ENCODE measurements at regions of chr11 and their contacts with region 1.

Region 1: GRCh38 chr11:57530596-57531507 is at the start of gene TIMM10:
- DNase-seq: peak; percentile 97
- H3K4me3 Mint-ChIP-seq: peak within 1 kb of the TSS; percentile 93
- H3K27ac Mint-ChIP-seq: peak within 1 kb of the TSS; percentile 80
- H3K4me1 Mint-ChIP-seq: peaks cover 35% of the 10 kb centered on the region
- H3K27me3 Mint-ChIP-seq: no peaks in the 10 kb centered on the region
- total RNA-seq, gene TIMM10: 131 to 134 TPM

Region 2: DNA sequence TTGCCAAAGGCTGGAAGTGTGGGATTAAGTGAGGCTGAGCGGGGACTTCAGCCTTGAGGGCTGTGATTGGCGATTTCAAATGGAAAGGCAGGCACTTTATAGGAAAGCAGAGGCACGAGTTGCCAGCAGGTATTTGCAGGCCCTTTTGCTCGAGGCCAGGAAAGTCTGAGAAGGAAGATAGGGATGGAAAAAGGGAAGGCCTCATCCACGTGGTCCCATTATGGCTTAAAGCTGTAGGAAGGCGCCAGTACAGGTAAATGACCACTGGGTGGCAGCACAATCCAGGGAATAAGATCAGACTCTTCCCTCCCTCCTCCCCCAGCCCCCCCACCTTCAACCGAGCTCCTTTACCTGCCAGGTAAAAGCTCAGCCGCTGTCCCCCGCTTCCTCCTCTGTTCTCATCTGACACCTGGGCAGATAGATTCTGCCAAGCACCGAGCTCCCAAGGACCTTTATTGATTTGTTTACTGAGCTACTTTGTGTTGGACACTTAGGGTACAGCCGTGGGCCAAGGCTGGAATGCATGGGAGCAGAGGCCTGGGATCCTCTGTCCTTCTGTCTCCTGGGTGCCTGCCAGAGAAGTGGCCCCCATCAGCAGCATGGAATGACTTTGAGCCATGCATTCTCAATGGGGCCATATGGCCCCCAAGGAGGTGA is 185.2 kb before region 1 on chr11:
- CTCF ChIA-PET with region 1: interaction called, 18 read pairs
- POLR2A ChIA-PET with region 1: no interaction called
- intact Hi-C with region 1: loop called (anchors 5 kb)
- DNase-seq: peak; percentile 76
- H3K4me3 Mint-ChIP-seq: no peak overlapping the region
- H3K27ac Mint-ChIP-seq: no peak overlapping the region
- H3K4me1 Mint-ChIP-seq: peaks cover 2% of the 10 kb centered on the region
- H3K27me3 Mint-ChIP-seq: peaks cover 2% of the 10 kb centered on the region

Region 3: GRCh38 chr11:57417056-57417455 is 113.8 kb before region 1 on chr11:
- CTCF ChIA-PET with region 1: no interaction called
- POLR2A ChIA-PET with region 1: no interaction called
- intact Hi-C with region 1: no loop called
- DNase-seq: no peak
- H3K4me3 Mint-ChIP-seq: no peak overlapping the region
- H3K27ac Mint-ChIP-seq: no peak overlapping the region
- H3K4me1 Mint-ChIP-seq: peaks cover 67% of the 10 kb centered on the region
- H3K27me3 Mint-ChIP-seq: no peaks in the 10 kb centered on the region

Region 4: DNA sequence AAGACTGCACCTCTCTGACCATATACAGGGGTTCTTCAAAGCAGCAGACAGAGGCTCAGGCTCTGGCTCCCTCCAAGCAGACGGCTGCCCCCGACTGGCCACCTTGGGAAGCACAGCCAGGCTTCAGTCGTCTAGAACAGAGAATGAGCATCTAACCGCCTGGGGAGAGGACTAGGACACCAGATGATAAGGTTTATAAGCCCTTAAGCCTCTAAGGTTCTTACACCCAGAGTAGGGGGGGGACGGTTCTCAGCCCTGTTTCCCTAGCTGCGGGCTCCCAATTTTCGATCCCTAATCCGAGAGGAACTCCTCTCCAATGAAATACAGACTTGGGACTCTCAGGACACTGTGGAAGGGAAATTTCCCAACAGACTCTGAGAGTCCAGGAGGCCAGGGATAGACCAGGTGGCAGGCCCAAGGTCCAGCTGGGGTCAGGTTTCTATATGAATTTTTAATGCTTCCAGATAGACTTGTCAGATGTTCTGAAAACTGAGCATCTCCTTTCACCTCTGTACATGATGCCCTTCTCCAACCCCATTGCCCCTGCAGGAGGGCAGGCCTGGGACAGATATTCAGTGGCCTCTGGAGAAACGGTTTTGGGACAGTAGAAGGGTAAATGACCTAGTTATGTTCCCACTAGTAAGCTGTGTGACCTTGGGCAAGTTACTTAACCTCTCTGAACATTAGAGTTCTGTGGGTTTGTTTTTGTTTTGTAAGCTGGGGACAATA is 50.3 kb before region 1 on chr11:
- CTCF ChIA-PET with region 1: interaction called, 25 read pairs
- POLR2A ChIA-PET with region 1: no interaction called
- intact Hi-C with region 1: no loop called
- DNase-seq: peak; percentile 87
- H3K4me3 Mint-ChIP-seq: no peak overlapping the region
- H3K27ac Mint-ChIP-seq: no peak overlapping the region
- H3K4me1 Mint-ChIP-seq: peaks cover 13% of the 10 kb centered on the region
- H3K27me3 Mint-ChIP-seq: peaks cover 17% of the 10 kb centered on the region

Region 5: DNA sequence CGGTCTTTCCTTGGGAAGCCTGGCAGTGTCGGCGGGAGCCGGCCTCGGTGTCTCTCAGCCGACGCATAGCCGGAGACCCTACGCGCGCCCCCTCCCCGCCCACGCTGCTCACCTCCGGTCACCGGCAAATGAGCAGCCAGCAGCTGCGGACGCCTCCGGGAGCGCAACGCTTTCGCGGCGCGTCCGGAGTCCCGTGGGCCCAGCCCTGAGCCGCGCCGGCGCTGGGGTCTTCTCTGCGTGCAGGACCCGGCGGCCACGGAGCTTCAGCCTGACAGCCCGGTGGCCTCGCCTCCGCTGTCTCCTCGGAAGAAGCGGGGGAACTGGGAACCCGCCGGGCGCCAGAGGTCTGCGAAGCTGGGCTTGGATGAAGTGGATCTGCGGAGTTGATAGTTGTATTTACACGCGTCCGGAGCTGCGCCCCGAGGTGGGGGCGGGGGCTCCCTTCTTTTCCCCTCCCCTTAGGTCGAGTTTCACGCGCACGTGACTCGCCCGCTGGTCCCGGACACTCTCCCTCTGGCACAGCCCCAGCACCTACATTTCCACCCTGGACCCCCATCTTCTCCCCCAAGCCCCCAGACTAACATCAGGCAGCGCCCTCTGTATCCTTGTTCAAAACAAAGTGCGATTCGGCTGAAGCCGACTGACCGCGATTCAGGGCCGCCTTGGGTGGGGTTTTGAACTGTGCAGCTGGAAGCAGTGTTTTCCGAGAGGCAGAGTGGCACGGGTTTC is 15.4 kb before region 1 on chr11 and contains the start of gene SLC43A1:
- CTCF ChIA-PET with region 1: interaction called, 112 read pairs
- POLR2A ChIA-PET with region 1: interaction called, 9 read pairs
- intact Hi-C with region 1: loop called (anchors 1 kb)
- DNase-seq: peak; percentile 60
- H3K4me3 Mint-ChIP-seq: peak within 1 kb of the TSS; percentile 96
- H3K27ac Mint-ChIP-seq: peak within 1 kb of the TSS; percentile 79
- H3K4me1 Mint-ChIP-seq: peaks cover 29% of the 10 kb centered on the region
- H3K27me3 Mint-ChIP-seq: no peaks in the 10 kb centered on the region
- total RNA-seq, gene SLC43A1: 23.1 to 23.3 TPM

Region 6: GRCh38 chr11:57657194-57658022 is 126.6 kb after region 1 on chr11 and contains the start of gene CLP1:
- CTCF ChIA-PET with region 1: interaction called, 3 read pairs
- POLR2A ChIA-PET with region 1: no interaction called
- intact Hi-C with region 1: loop called (anchors 1 kb)
- DNase-seq: peak; percentile 100
- H3K4me3 Mint-ChIP-seq: peak within 1 kb of the TSS; percentile 100
- H3K27ac Mint-ChIP-seq: peak within 1 kb of the TSS; percentile 94
- H3K4me1 Mint-ChIP-seq: peaks cover 33% of the 10 kb centered on the region
- H3K27me3 Mint-ChIP-seq: no peaks in the 10 kb centered on the region
- total RNA-seq, gene CLP1: 13.9 to 15.2 TPM

Region 7: DNA sequence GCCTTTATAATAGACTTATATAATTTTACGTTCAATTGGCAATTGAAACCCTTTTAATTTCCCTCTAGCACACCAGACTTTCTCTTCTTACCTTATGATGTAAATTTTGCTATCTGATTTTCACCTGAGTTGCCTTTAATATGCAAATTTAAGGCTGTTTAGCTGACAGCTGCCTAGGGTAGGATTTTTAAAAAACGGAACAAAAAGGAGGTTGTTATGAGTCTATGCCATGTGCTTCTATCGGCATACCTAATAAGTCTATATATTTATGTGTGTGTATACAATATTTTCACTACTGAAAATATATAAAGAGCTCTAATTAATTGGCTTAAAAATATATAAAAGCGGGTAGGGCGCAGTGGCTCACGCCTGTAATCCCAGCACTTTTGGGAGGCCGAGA is 198.6 kb after region 1 on chr11:
- CTCF ChIA-PET with region 1: no interaction called
- POLR2A ChIA-PET with region 1: no interaction called
- intact Hi-C with region 1: no loop called
- DNase-seq: no peak
- H3K4me3 Mint-ChIP-seq: no peak overlapping the region
- H3K27ac Mint-ChIP-seq: no peak overlapping the region
- H3K4me1 Mint-ChIP-seq: peaks cover 12% of the 10 kb centered on the region
- H3K27me3 Mint-ChIP-seq: no peaks in the 10 kb centered on the region

Region 8: GRCh38 chr11:57741132-57742086 is 210.6 kb after region 1 on chr11 and contains the start of gene SELENOH:
- CTCF ChIA-PET with region 1: no interaction called
- POLR2A ChIA-PET with region 1: no interaction called
- intact Hi-C with region 1: loop called (anchors 1 kb)
- DNase-seq: peak; percentile 98
- H3K4me3 Mint-ChIP-seq: peak within 1 kb of the TSS; percentile 97
- H3K27ac Mint-ChIP-seq: peak within 1 kb of the TSS; percentile 99
- H3K4me1 Mint-ChIP-seq: peaks cover 40% of the 10 kb centered on the region
- H3K27me3 Mint-ChIP-seq: no peaks in the 10 kb centered on the region
- total RNA-seq, gene SELENOH: 235 to 252 TPM

Measured in activated CD4-positive, alpha-beta memory T cell treated with anti-CD3 and anti-CD28 coated beads for 36 hours (primary cell).